Activated naive CD4-positive, alpha-beta T cell treated with anti-CD3 and anti-CD28 coated beads for 36 hours (primary cell): ENCODE measurements at regions of chr19 and their contacts with region 1.

Region 1: GRCh38 chr19:2151339-2152229 is at the start of gene AP3D1:
- DNase-seq: peak; percentile 100
- H3K4me3 Mint-ChIP-seq: peak within 1 kb of the TSS; percentile 83
- H3K27ac Mint-ChIP-seq: peak within 1 kb of the TSS; percentile 74
- H3K4me1 Mint-ChIP-seq: peaks cover 39% of the 10 kb centered on the region
- H3K27me3 Mint-ChIP-seq: no peaks in the 10 kb centered on the region
- total RNA-seq, gene AP3D1: 60.5 to 64.2 TPM

Region 2: GRCh38 chr19:2016041-2016807 is 135.4 kb before region 1 on chr19:
- CTCF ChIA-PET with region 1: interaction called, 3 read pairs
- intact Hi-C with region 1: loop called (anchors 5 kb)
- DNase-seq: peak; percentile 77
- H3K4me3 Mint-ChIP-seq: peak overlapping the region; percentile 59
- H3K27ac Mint-ChIP-seq: peak overlapping the region; percentile 47
- H3K4me1 Mint-ChIP-seq: peaks cover 17% of the 10 kb centered on the region
- H3K27me3 Mint-ChIP-seq: no peaks in the 10 kb centered on the region

Region 3: DNA sequence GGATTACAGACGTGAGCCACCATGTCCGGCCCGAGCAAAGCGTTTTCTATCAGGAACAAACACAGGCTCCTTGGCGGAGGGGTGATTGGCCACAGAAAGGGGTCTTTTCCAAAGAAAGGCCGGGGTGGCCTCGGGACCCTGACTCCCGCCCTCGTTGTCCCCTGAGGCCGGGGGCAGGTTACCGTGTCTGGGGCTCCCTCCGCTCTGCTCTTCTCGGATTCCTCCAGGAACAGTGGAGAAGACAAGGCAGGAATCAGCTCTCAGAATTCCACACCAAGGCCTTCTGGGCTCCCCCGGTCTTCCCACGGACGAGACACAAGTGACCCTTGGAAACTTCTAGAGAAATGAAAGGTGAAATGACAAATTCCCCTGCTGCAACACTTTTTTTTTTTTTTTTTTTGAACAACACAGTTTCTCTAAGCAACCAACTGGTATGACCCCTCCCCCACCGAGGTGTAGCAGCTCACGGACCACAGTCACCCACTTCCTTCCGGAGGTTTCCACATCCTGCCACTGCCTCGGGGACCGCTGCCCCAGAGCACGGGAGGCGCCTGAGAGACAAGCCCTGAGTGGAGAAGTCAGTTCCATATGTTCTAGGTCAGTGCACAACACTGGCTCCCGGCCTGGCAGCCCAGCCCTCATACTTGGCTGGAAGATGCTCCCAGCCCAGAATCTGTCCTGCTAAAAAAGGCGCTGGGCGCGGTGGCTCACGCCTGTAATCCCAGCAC is 66.4 kb before region 1 on chr19:
- CTCF ChIA-PET with region 1: no interaction called
- intact Hi-C with region 1: loop called (anchors 1 kb)
- DNase-seq: peak; percentile 97
- H3K4me3 Mint-ChIP-seq: peak overlapping the region; percentile 93
- H3K27ac Mint-ChIP-seq: peak overlapping the region; percentile 98
- H3K4me1 Mint-ChIP-seq: peaks cover 65% of the 10 kb centered on the region
- H3K27me3 Mint-ChIP-seq: no peaks in the 10 kb centered on the region

Region 4: DNA sequence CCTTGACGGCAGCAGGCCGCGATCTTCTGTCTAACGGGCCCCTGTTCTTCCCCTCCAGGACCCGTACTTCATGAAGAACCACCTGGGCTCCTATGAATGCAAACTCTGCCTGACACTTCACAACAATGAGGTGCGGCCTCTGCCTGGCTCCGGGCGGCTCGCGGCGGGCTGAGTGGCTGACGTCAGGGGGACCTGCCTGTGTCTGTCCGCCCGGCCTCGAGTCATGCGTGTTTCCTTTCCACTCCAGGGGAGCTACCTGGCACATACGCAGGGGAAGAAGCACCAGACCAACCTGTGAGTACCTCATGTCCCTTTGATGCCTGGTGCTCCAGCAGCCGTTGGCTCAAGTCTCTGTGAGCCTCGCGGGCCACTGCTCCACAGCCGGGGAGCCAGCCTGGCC is 92.9 kb after region 1 on chr19:
- CTCF ChIA-PET with region 1: no interaction called
- intact Hi-C with region 1: no loop called
- DNase-seq: no peak
- H3K4me3 Mint-ChIP-seq: no peak overlapping the region
- H3K27ac Mint-ChIP-seq: no peak overlapping the region
- H3K4me1 Mint-ChIP-seq: peaks cover 31% of the 10 kb centered on the region
- H3K27me3 Mint-ChIP-seq: no peaks in the 10 kb centered on the region

Region 5: GRCh38 chr19:2261438-2262172 is 110.0 kb after region 1 on chr19:
- CTCF ChIA-PET with region 1: interaction called, 5 read pairs
- intact Hi-C with region 1: loop called (anchors 1 kb)
- DNase-seq: peak; percentile 78
- H3K4me3 Mint-ChIP-seq: no peak overlapping the region
- H3K27ac Mint-ChIP-seq: no peak overlapping the region
- H3K4me1 Mint-ChIP-seq: peaks cover 29% of the 10 kb centered on the region
- H3K27me3 Mint-ChIP-seq: no peaks in the 10 kb centered on the region

Region 6: GRCh38 chr19:2328401-2329148 is 177.0 kb after region 1 on chr19 and contains the starts of genes LSM7 and SPPL2B:
- CTCF ChIA-PET with region 1: no interaction called
- intact Hi-C with region 1: loop called (anchors 5 kb)
- DNase-seq: peak; percentile 92
- H3K4me3 Mint-ChIP-seq: peak within 1 kb of the TSS; percentile 96
- H3K27ac Mint-ChIP-seq: peak within 1 kb of the TSS; percentile 94
- H3K4me1 Mint-ChIP-seq: peaks cover 72% of the 10 kb centered on the region
- H3K27me3 Mint-ChIP-seq: no peaks in the 10 kb centered on the region
- total RNA-seq, gene LSM7: 162 to 164 TPM
- total RNA-seq, gene SPPL2B: 56.8 to 59.6 TPM

Region 7: GRCh38 chr19:2627319-2627829 is 475.8 kb after region 1 on chr19:
- CTCF ChIA-PET with region 1: no interaction called
- intact Hi-C with region 1: loop called (anchors 5 kb)
- DNase-seq: peak; percentile 78
- H3K4me3 Mint-ChIP-seq: no peak overlapping the region
- H3K27ac Mint-ChIP-seq: peak overlapping the region; percentile 70
- H3K4me1 Mint-ChIP-seq: peaks cover 48% of the 10 kb centered on the region
- H3K27me3 Mint-ChIP-seq: no peaks in the 10 kb centered on the region